ENCODE measurements at regions of chr20 and their contacts with region 1.

Region 1: GRCh38 chr20:63973636-63974402 is 4.1 kb upstream of the ZNF512B start:
- DNase-seq: peak; percentile 90
- H3K4me3 ChIP-seq: no peak overlapping the region
- H3K27ac ChIP-seq: no peak overlapping the region
- H3K4me1 ChIP-seq: peaks cover 8% of the 10 kb centered on the region
- H3K27me3 ChIP-seq: peaks cover 5% of the 10 kb centered on the region
- CTCF ChIP-seq: peak; percentile 99

Region 2: DNA sequence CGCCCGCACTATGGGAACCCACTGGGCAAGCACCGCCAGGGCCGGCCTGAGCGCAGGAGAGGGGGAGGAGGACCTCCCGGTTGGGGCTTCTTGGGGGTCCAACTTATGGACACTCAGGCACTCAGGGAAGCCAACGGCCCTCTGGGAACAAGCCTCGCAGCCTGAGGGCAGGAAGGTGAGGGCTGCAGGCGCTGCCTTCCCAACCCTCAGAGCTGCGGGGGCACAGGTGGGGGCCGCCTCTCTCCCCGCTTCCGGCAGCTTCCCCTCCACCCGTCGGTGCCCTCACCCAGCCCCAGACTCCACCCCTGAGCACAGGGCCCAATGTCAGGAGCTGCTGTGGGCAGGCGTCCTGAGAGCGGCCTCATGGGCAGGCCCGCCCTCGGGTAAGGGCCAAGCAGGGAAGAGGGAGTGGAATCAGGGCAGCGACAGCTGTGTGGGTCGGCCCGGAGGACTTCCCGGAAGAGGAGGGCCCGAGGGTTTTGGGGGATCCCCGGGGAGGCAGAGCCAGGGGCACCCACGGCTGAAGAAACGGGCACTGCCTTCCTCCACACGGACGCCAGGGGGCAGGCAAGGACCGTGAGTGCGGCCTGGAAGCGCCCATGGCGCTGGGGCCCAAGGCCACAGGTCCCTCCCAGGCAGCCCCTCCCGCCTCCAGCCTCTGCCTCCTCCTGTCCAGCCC is 436.2 kb before region 1 on chr20:
- intact Hi-C with region 1: loop called (anchors 10 kb)
- DNase-seq: peak; percentile 97
- H3K4me3 ChIP-seq: peak overlapping the region; percentile 45
- H3K27ac ChIP-seq: peak overlapping the region; percentile 98
- H3K4me1 ChIP-seq: peaks cover 12% of the 10 kb centered on the region
- H3K27me3 ChIP-seq: no peaks in the 10 kb centered on the region
- CTCF ChIP-seq: peak; percentile 95

Region 3: DNA sequence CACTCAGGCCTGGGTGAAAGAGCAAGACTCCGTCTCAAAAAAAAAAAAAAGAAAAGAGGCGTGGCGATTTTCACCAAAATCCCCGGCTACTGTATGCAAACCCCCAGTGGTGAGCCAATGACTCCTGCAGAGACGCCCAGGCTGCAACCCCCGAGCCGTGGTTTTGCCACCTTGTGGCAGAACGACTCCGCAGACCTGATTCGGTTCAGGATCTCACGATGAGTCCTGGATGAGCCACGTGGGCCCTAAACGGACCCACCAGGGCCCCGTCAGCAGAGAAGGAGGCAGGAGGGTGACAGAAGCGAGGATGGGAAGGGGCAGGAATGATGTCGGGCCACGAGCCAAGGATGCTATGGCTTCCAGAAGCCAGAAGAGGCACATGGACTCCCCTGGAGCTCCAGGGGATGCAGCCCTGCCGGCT is 191.8 kb before region 1 on chr20:
- intact Hi-C with region 1: loop called (anchors 10 kb)
- DNase-seq: no peak
- H3K4me3 ChIP-seq: no peak overlapping the region
- H3K27ac ChIP-seq: no peak overlapping the region
- H3K4me1 ChIP-seq: no peaks in the 10 kb centered on the region
- H3K27me3 ChIP-seq: no peaks in the 10 kb centered on the region
- CTCF ChIP-seq: no peak

Region 4: DNA sequence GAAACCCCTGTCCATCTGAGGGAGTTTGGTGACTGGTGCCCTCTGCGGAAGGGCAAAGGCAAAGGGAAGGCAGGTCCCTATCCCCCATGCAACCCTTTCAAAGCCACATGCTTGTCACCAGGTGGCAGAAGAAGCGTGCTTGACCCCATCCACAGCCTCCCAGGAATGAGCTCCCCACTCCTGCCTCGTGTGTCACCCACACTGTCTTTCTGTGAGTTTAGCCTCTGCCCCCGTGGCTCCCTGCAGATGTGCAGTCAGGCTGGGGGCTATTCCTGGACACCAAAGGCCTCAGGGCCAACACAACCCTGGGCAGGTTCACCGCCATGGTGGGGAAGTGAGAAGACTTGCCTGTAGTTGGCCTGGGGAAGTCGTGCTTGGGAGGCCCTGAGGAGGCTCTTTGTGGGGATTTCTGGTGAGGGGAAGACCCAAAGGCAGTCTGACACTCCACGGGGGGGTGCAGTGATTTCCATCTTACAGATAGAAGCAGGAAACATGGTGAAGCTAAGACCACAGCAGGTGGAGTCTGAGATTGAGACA is 265.1 kb after region 1 on chr20:
- intact Hi-C with region 1: no loop called
- DNase-seq: no peak
- H3K4me3 ChIP-seq: no peak overlapping the region
- H3K27ac ChIP-seq: no peak overlapping the region
- H3K4me1 ChIP-seq: no peaks in the 10 kb centered on the region
- H3K27me3 ChIP-seq: no peaks in the 10 kb centered on the region
- CTCF ChIP-seq: no peak

Measured in colonic mucosa (tissue), 4 donors.